Activated naive CD4-positive, alpha-beta T cell treated with anti-CD3 and anti-CD28 coated beads, Interleukin-2, amount 10 ng/mL, durations not matched to agents 7 days and 5 days (primary cell): ENCODE measurements at regions of chr1 and their contacts with region 1.

Region 1: GRCh38 chr1:207868774-207869721 is 41.9 kb downstream of the CD34 start:
- DNase-seq: peak; percentile 68
- H3K4me3 Mint-ChIP-seq: peak overlapping the region; percentile 95
- H3K27ac Mint-ChIP-seq: peak overlapping the region; percentile 97
- H3K4me1 Mint-ChIP-seq: peaks cover 83% of the 10 kb centered on the region
- H3K27me3 Mint-ChIP-seq: no peaks in the 10 kb centered on the region

Region 2: GRCh38 chr1:207841293-207841692 is 27.8 kb before region 1 on chr1:
- CTCF ChIA-PET with region 1: interaction called, 237 read pairs
- DNase-seq: no peak
- H3K4me3 Mint-ChIP-seq: no peak overlapping the region
- H3K27ac Mint-ChIP-seq: no peak overlapping the region
- H3K4me1 Mint-ChIP-seq: peaks cover 20% of the 10 kb centered on the region
- H3K27me3 Mint-ChIP-seq: no peaks in the 10 kb centered on the region

Region 3: DNA sequence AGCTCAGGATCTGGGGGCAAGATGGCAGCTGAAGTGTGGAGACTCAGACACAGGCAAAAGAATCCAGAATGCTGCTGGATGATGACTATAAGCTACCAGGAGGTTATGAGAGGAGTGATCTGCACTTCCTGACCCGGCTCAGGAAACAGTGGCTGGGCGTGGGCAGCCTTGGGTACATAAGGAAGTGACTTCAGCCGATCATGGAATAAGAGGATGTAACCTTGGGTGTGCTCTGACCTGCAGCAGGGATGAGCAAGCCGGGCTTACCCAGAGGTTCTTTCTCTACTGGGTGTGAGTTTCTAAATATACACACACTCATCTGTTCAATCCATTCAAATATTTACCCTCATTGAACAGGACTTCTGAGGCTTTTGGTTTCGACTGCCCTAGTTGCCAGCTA is 20.8 kb before region 1 on chr1:
- CTCF ChIA-PET with region 1: interaction called, 11 read pairs
- DNase-seq: peak; percentile 53
- H3K4me3 Mint-ChIP-seq: peak overlapping the region; percentile 13
- H3K27ac Mint-ChIP-seq: peak overlapping the region; percentile 72
- H3K4me1 Mint-ChIP-seq: peaks cover 45% of the 10 kb centered on the region
- H3K27me3 Mint-ChIP-seq: no peaks in the 10 kb centered on the region